HEK293 (cell line): ENCODE measurements at regions of chr1 and their contacts with region 1.

Region 1: DNA sequence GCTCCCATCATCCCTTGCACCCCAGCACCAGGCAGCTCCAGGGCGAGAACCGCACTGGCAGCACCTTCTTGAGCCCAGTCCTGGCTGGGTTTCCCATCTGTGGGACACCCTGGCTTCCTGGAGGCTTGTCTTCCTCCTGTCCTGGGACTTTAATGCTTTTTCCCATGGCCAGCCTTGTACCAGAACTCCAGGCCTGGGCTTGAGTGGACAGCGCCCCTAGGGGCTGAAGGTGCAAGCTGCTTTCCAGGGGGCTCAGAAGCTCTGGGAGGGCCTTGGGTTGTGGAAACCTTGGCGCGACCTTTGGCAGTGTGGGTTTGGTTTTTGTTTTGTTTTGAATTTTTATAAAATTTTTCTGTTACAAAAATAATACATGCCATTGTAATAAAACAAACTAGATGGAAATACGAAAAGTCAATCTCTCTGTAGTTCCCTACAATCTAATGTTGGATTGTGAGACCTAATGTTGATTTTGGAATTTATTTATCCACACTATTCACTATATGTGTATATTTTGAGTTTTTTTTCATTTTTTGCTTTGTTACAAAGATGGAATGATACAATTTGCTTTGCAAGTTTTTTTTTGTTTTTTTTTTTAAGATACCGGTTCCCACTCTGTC is 33.8 kb upstream of the RPL11 start:
- H3K4me3 ChIP-seq: no peak overlapping the region
- H3K27ac ChIP-seq: no peak overlapping the region
- H3K4me1 ChIP-seq: no peaks in the 10 kb centered on the region
- CTCF ChIP-seq: peak; percentile 60

Region 2: GRCh38 chr1:23539698-23540266 is 118.0 kb before region 1 on chr1:
- CTCF ChIA-PET with region 1: interaction called, 68 read pairs
- POLR2A ChIA-PET with region 1: no interaction called
- H3K4me3 ChIP-seq: no peak overlapping the region
- H3K27ac ChIP-seq: no peak overlapping the region
- H3K4me1 ChIP-seq: no peaks in the 10 kb centered on the region
- CTCF ChIP-seq: peak; percentile 95

Region 3: GRCh38 chr1:23643736-23644554 is 13.8 kb before region 1 on chr1:
- CTCF ChIA-PET with region 1: interaction called, 64 read pairs
- POLR2A ChIA-PET with region 1: no interaction called
- H3K4me3 ChIP-seq: no peak overlapping the region
- H3K27ac ChIP-seq: peak overlapping the region; percentile 37; the same call in 1 of the 2 replicates
- H3K4me1 ChIP-seq: peaks cover 14% of the 10 kb centered on the region
- CTCF ChIP-seq: no peak

Region 4: DNA sequence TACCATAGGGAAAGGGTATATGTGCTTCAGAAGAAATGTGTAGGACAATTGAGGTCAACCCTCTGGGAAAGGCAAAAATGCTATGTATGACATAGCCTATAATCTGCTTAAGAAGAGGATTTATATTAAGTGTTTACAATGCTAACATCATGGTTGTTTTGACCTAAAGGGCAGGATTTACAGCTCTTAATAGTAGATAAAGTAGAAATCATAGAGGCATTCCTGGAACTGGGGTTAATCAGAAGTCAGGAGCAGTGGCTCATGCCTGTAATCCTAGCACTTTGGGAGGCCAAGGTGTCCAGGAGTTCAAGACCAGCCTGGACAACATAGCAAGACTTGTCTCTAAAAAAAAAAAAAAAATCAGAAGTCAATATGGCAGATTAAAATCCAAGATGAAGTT is 25.2 kb after region 1 on chr1:
- CTCF ChIA-PET with region 1: interaction called, 10 read pairs
- POLR2A ChIA-PET with region 1: no interaction called
- H3K4me3 ChIP-seq: no peak overlapping the region
- H3K27ac ChIP-seq: no peak overlapping the region
- H3K4me1 ChIP-seq: no peaks in the 10 kb centered on the region
- CTCF ChIP-seq: no peak